Activated CD4-positive, alpha-beta memory T cell treated with anti-CD3 and anti-CD28 coated beads for 36 hours (primary cell): ENCODE measurements at regions of chr1 and their contacts with region 1.

Region 1: GRCh38 chr1:165697881-165698760 is at the start of gene ALDH9A1:
- DNase-seq: peak; percentile 93
- H3K4me3 Mint-ChIP-seq: peak within 1 kb of the TSS; percentile 100
- H3K27ac Mint-ChIP-seq: peak within 1 kb of the TSS; percentile 99
- H3K4me1 Mint-ChIP-seq: peaks cover 25% of the 10 kb centered on the region
- H3K27me3 Mint-ChIP-seq: no peaks in the 10 kb centered on the region
- total RNA-seq, gene ALDH9A1: 34.1 to 43.2 TPM

Region 2: GRCh38 chr1:165686121-165686970 is 11.8 kb before region 1 on chr1:
- CTCF ChIA-PET with region 1: interaction called, 15 read pairs
- POLR2A ChIA-PET with region 1: interaction called, 4 read pairs
- intact Hi-C with region 1: loop called (anchors 1 kb)
- DNase-seq: no peak
- H3K4me3 Mint-ChIP-seq: no peak overlapping the region
- H3K27ac Mint-ChIP-seq: peak overlapping the region; percentile 71
- H3K4me1 Mint-ChIP-seq: peaks cover 41% of the 10 kb centered on the region
- H3K27me3 Mint-ChIP-seq: no peaks in the 10 kb centered on the region

Region 3: GRCh38 chr1:165871311-165872067 is 173.4 kb after region 1 on chr1:
- CTCF ChIA-PET with region 1: no interaction called
- POLR2A ChIA-PET with region 1: no interaction called
- intact Hi-C with region 1: loop called (anchors 5 kb)
- DNase-seq: peak; percentile 76
- H3K4me3 Mint-ChIP-seq: no peak overlapping the region
- H3K27ac Mint-ChIP-seq: peak overlapping the region; percentile 20
- H3K4me1 Mint-ChIP-seq: peaks cover 34% of the 10 kb centered on the region
- H3K27me3 Mint-ChIP-seq: no peaks in the 10 kb centered on the region